HEK293 (cell line): ENCODE measurements at regions of chr10 and their contacts with region 1.

Region 1: GRCh38 chr10:100046021-100046486 is 35.6 kb downstream of the CPN1 start:
- H3K4me3 ChIP-seq: no peak overlapping the region
- H3K27ac ChIP-seq: no peak overlapping the region
- H3K4me1 ChIP-seq: peaks cover 5% of the 10 kb centered on the region; the same call in 1 of the 2 replicates
- CTCF ChIP-seq: peak; percentile 78

Region 2: GRCh38 chr10:99845837-99846382 is 200.1 kb before region 1 on chr10:
- CTCF ChIA-PET with region 1: interaction called, 264 read pairs
- POLR2A ChIA-PET with region 1: interaction called, 3 read pairs
- H3K4me3 ChIP-seq: no peak overlapping the region
- H3K27ac ChIP-seq: no peak overlapping the region
- H3K4me1 ChIP-seq: no peaks in the 10 kb centered on the region
- CTCF ChIP-seq: peak; percentile 87; the same call in 1 of the 2 replicates

Region 3: GRCh38 chr10:99966306-99966705 is 79.7 kb before region 1 on chr10:
- CTCF ChIA-PET with region 1: interaction called, 16 read pairs
- POLR2A ChIA-PET with region 1: no interaction called
- H3K4me3 ChIP-seq: no peak overlapping the region
- H3K27ac ChIP-seq: no peak overlapping the region
- H3K4me1 ChIP-seq: no peaks in the 10 kb centered on the region
- CTCF ChIP-seq: no peak

Region 4: GRCh38 chr10:99993701-99994689 is 52.1 kb before region 1 on chr10:
- CTCF ChIA-PET with region 1: interaction called, 20 read pairs
- POLR2A ChIA-PET with region 1: no interaction called
- H3K4me3 ChIP-seq: no peak overlapping the region
- H3K27ac ChIP-seq: no peak overlapping the region
- H3K4me1 ChIP-seq: peaks cover 16% of the 10 kb centered on the region
- CTCF ChIP-seq: no peak

Region 5: DNA sequence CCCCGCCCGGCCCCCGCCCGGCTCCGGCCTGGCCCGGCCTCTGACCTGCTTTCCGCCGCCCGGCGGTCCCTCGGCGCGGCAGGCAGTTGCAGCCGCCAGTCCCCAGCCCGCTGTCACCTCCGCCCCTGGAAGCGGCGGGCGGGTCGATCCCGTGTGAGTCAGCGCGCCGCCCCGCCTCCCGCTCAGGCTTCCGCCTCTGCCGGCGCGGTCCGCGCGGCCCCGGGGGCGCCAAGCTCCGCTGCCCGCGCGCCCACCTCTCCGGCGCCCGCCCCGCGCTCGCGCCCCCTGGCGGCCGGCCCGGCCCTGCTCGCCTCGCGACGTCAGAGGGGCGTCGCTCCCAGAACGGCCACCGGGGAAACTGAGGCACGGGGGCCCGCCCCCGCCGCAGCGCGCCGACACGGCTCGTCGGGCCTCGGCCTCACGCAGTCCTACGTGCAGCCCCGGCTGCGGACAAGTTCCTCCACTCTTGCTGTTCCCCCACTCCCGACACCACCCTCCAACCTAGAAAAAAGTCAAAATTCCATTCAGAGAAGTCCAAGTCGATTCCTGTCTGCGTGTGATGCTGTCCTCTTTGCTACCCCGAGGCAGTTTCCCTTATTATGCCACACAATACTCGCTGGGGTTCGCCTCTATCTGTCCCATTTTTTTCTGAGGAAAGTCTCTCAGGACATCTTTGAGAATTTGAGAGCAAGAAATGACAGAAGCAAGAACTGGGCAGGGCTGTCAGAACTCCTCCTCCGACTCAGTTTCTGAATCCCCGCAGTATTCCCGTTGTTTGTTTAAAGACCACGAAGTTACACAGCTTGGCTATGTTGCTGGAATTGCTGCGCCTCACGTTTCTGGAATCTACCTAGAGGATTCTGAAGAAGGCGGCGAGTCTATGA is 36.0 kb before region 1 on chr10 and contains the start of gene DNMBP:
- CTCF ChIA-PET with region 1: interaction called, 43 read pairs
- POLR2A ChIA-PET with region 1: no interaction called
- H3K4me3 ChIP-seq: peak within 1 kb of the TSS; percentile 72
- H3K27ac ChIP-seq: peak within 1 kb of the TSS; percentile 66; the same call in 1 of the 2 replicates
- H3K4me1 ChIP-seq: peaks cover 16% of the 10 kb centered on the region
- CTCF ChIP-seq: no peak; the same call in 1 of the 2 replicates

Region 6: DNA sequence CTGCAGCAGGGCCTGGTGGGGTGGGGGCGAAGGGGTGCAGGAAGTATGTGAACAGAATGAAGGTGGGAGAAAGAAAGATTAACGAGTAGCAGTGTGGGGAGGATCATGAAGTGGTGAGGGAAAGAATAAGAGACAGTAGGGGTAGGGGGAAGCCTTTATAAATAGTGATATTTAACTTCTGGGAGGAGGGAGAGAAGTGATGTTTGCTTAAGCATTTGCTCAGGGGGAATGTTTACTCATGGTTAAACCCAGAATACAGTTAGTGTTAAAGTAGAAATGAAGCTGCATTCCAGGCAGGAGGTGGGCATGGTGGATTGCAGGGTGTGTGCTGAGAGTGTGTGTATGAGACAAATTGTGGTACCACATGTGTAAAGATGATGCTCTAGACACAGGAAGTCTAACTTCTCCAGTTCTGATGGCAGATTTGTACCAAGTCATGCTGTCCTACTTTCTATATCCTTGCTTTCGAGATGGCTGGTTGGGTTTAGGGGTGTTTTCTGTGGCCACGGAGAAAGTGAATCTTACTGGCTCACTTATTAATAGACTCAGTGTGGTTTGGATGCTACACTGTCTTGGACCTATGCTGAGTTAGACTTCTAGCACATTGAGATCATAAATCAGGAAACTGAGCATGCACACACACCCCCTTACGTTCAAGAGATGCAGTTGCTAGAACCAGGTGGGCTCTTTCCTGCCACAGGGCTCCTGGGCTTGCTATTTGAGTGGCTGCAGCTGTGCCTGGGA is 25.7 kb before region 1 on chr10:
- CTCF ChIA-PET with region 1: interaction called, 11 read pairs
- POLR2A ChIA-PET with region 1: no interaction called
- H3K4me3 ChIP-seq: no peak overlapping the region
- H3K27ac ChIP-seq: no peak overlapping the region
- H3K4me1 ChIP-seq: peaks cover 4% of the 10 kb centered on the region; the same call in 1 of the 2 replicates
- CTCF ChIP-seq: no peak; the same call in 1 of the 2 replicates

Region 7: DNA sequence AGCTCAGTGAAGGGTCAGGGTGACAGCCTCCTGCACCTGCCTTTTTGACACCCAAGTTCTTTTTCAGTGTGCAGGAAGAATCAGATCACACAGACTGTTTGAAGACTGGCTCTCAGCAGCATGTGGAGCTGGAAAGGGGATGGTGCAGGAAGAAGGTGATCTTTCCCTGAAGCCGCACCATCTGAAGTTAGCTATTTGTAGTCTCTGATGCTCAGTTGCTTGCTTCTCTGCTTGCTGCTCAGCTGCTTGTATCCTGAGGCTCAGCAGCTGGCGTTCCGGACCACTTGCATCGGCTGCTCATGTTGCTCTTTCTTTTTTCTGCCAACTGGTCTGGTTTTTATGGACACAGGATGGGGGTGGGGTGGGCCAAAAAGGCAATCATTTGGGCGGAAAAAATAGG is 20.5 kb before region 1 on chr10:
- CTCF ChIA-PET with region 1: interaction called, 11 read pairs
- POLR2A ChIA-PET with region 1: no interaction called
- H3K4me3 ChIP-seq: no peak overlapping the region
- H3K27ac ChIP-seq: no peak overlapping the region
- H3K4me1 ChIP-seq: no peaks in the 10 kb centered on the region
- CTCF ChIP-seq: no peak